Body of pancreas (tissue), 4 donors: ENCODE measurements at regions of chr15 and their contacts with region 1.

Region 1: GRCh38 chr15:101008158-101009139 is 89.3 kb downstream of the LRRK1 start:
- DNase-seq: peak; percentile 89 to 93 (median 91)
- ATAC-seq: peak; percentile 93
- H3K4me3 ChIP-seq: peak overlapping the region; percentile 4 to 35
- H3K27ac ChIP-seq: peak overlapping the region in 3 of 4 donors; percentile 42 to 78 (median 69)
- H3K4me1 ChIP-seq: peaks cover 21% of the 10 kb centered on the region
- H3K27me3 ChIP-seq: no peaks in the 10 kb centered on the region
- CTCF ChIP-seq: peak; percentile 95 to 100 (median 97)
- POLR2A ChIP-seq: peak in 2 of 3 donors; percentile 61 to 62

Region 2: GRCh38 chr15:100918034-100918689 is 90.3 kb before region 1 on chr15:
- intact Hi-C with region 1: loop called (anchors 5 kb)
- DNase-seq: peak; percentile 83 to 88 (median 86)
- ATAC-seq: peak; percentile 87
- H3K4me3 ChIP-seq: peak overlapping the region; percentile 33 to 63
- H3K27ac ChIP-seq: peak overlapping the region; percentile 42 to 77 (median 69)
- H3K4me1 ChIP-seq: peaks cover 20% of the 10 kb centered on the region
- H3K27me3 ChIP-seq: no peaks in the 10 kb centered on the region
- CTCF ChIP-seq: peak; percentile 81 to 96 (median 95)
- POLR2A ChIP-seq: peak; percentile 43 to 57 (median 56)

Region 3: DNA sequence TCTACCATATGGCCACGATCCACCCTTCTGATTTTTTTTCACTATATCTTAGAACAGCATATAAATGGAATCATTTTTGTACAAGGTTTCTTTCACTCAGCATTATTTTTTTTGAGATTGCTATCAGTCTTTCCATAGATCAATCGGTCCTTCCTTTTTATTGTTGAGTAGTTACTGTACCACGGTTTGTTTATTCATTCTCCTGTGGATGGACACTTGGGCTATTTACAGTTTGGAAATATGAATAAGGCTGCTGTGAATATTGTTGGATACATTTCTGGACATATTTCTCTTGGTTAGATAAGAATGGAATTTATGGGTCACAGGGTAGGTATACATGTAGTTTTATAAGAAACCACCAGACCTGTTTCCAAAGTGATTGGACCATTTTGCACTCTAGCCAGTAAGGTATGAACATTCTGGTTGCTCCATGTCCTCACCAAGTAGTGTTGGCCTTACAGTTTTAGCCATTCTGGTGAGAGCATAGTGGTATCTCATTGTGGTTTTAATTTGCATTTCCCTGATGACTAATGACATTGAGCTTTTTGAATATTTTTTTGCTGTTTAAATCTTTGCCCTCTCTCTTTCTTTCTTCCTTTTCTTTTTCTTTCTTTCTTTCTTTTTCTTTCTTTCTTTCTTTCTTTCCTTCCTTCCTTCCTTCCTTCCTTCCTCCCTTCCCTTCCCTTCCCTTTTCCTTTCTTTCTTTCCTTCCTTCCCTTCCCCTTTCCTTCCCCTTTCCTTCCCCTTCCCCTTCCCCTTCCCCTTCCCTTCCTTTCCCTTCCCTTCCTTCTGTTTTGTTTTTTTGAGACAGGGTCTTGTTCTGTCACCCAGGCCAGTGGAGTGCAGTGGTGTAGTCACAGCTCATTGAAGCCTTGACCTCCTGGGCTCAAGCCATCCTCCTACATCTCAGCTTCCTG is 40.1 kb before region 1 on chr15:
- intact Hi-C with region 1: no loop called
- DNase-seq: no peak
- ATAC-seq: no peak
- H3K4me3 ChIP-seq: no peak overlapping the region
- H3K27ac ChIP-seq: no peak overlapping the region
- H3K4me1 ChIP-seq: peaks cover 5% of the 10 kb centered on the region
- H3K27me3 ChIP-seq: no peaks in the 10 kb centered on the region
- CTCF ChIP-seq: no peak
- POLR2A ChIP-seq: no peak

Region 4: GRCh38 chr15:101242160-101242998 is 233.9 kb after region 1 on chr15:
- intact Hi-C with region 1: no loop called
- DNase-seq: peak in 1 of 4 donors; percentile 44
- ATAC-seq: peak; percentile 33
- H3K4me3 ChIP-seq: no peak overlapping the region
- H3K27ac ChIP-seq: no peak overlapping the region
- H3K4me1 ChIP-seq: peaks cover 11% of the 10 kb centered on the region
- H3K27me3 ChIP-seq: no peaks in the 10 kb centered on the region
- CTCF ChIP-seq: no peak
- POLR2A ChIP-seq: no peak